PC-9 (cell line): ENCODE measurements at regions of chr22 and their contacts with region 1.

Region 1: DNA sequence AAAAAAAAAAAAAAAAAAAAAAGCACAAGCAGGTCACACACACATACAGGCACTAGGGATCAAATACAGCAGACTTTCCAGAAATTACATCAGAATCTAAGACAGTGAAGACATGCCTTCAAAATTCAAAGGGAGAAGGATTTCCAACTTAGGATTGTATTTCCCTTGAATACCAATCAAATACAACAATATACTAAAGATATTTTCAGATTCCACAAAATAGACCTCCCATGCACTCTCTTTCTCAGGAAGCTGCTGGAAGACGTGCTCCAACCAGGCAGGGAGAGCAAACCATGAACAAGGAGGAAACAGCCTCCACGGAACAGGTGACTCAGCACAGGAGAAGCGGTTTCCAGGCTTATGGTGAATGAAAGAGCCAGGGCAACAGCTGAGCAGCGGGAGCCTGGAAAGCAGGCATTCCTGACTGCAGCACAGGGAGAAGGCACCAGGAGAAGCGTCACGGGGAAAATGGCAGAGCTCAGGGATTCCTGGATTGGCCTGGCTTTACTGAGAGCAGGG is 32.0 kb downstream of the TMEM184B start:
- DNase-seq: peak; percentile 80 to 95
- H3K4me3 ChIP-seq: peak overlapping the region; percentile 1; the same call in 1 of the 2 replicates
- H3K27ac ChIP-seq: peak overlapping the region; percentile 97
- H3K4me1 ChIP-seq: peaks cover 66% of the 10 kb centered on the region
- H3K27me3 ChIP-seq: no peaks in the 10 kb centered on the region
- CTCF ChIP-seq: no peak

Region 2: GRCh38 chr22:38207898-38208432 is 32.8 kb before region 1 on chr22:
- CTCF ChIA-PET with region 1: interaction called, 3 read pairs
- POLR2A ChIA-PET with region 1: interaction called, 15 read pairs
- intact Hi-C with region 1: no loop called
- DNase-seq: no peak
- H3K4me3 ChIP-seq: no peak overlapping the region
- H3K27ac ChIP-seq: no peak overlapping the region
- H3K4me1 ChIP-seq: peaks cover 24% of the 10 kb centered on the region
- H3K27me3 ChIP-seq: no peaks in the 10 kb centered on the region
- CTCF ChIP-seq: no peak

Region 3: DNA sequence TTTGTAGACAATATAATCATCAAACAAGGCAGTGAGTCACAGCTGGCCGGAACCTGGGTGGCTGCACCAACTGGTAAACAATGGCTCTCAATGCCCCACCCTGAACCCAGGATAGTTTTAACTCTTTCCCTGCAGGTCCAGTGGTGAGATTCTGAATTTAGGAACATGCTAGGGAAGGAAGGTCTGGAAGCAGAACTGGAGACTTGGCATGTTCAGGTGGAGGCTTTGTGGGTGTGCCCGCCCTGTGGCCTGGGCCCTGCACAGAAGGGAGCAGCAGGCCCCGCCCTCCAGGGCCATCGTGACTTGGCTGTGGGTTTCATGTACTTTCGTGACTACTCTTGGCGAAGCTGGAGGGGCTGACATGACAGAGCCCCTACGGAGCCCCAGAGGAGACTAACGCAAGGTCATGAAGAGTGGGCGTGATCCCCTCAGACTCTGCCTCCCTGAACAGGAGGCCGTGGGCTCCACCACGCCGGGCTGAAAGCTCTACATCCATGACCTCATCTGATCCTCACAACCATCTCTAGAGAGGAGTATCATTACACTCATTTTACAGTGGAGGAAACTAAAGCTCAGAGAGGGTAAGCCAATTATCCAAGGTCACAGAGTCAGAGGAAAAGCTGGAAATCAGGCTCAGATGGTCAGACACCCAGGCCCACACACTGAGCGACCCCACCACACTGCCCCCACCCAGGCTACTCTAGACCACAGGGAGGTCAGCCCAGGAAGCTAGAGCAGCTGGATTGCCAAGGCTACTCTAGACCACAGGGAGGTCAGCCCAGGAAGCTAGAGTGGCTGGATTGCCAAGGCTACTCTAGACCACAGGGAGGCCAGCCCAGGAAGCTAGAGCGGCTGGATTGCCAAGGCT is 11.7 kb before region 1 on chr22:
- CTCF ChIA-PET with region 1: interaction called, 5 read pairs
- POLR2A ChIA-PET with region 1: no interaction called
- intact Hi-C with region 1: loop called (anchors 1 kb)
- DNase-seq: peak; percentile 79 to 88
- H3K4me3 ChIP-seq: no peak overlapping the region; the same call in 1 of the 2 replicates
- H3K27ac ChIP-seq: peak overlapping the region; percentile 90
- H3K4me1 ChIP-seq: peaks cover 41% of the 10 kb centered on the region
- H3K27me3 ChIP-seq: no peaks in the 10 kb centered on the region
- CTCF ChIP-seq: no peak

Region 4: DNA sequence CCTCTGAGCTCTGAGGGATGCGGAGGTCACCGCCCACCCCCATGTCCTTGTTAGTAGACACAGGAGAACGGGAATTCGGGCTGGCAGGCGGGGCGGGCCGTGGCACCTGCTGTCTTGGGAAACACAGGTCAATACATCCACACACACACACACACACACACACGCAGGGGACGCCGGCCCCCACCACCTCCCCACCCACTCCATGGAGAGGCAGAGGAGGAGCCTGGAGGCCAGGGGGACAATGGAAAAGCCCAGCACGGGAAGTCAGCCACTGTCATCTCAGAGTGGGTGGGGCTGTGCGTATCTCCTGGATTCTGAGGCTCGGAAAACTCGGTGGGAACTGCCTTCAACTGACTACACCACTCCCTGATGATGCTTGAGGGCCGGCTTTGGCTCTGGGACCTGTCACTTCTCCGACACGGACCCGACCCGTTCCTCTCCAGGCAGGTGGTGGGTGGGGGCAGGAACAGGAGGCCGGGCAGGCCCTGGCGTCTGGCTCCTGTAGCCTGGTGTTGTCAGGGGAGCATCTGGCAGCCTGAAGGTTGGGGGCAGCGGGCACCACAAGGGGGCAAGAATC is 50.5 kb after region 1 on chr22:
- CTCF ChIA-PET with region 1: no interaction called
- POLR2A ChIA-PET with region 1: interaction called, 5 read pairs
- intact Hi-C with region 1: loop called (anchors 1 kb)
- DNase-seq: peak; percentile 24 to 52
- H3K4me3 ChIP-seq: no peak overlapping the region
- H3K27ac ChIP-seq: peak overlapping the region; percentile 94
- H3K4me1 ChIP-seq: peaks cover 73% of the 10 kb centered on the region
- H3K27me3 ChIP-seq: no peaks in the 10 kb centered on the region
- CTCF ChIP-seq: no peak

Region 5: GRCh38 chr22:38338772-38339379 is 98.1 kb after region 1 on chr22:
- CTCF ChIA-PET with region 1: no interaction called
- POLR2A ChIA-PET with region 1: no interaction called
- intact Hi-C with region 1: no loop called
- DNase-seq: no peak
- H3K4me3 ChIP-seq: no peak overlapping the region
- H3K27ac ChIP-seq: no peak overlapping the region
- H3K4me1 ChIP-seq: peaks cover 21% of the 10 kb centered on the region
- H3K27me3 ChIP-seq: no peaks in the 10 kb centered on the region
- CTCF ChIP-seq: no peak

Region 6: GRCh38 chr22:38569972-38570778 is 329.4 kb after region 1 on chr22 and contains the start of gene DMC1:
- CTCF ChIA-PET with region 1: no interaction called
- POLR2A ChIA-PET with region 1: no interaction called
- intact Hi-C with region 1: loop called (anchors 5 kb)
- DNase-seq: peak; percentile 77 to 91
- H3K4me3 ChIP-seq: peak within 1 kb of the TSS; percentile 64
- H3K27ac ChIP-seq: no peak within 1 kb of the TSS
- H3K4me1 ChIP-seq: peaks cover 10% of the 10 kb centered on the region
- H3K27me3 ChIP-seq: no peaks in the 10 kb centered on the region
- CTCF ChIP-seq: no peak
- total RNA-seq, gene DMC1: 5.6 and 6.3 TPM in 2 replicates